Sigmoid colon (tissue), 7 donors: ENCODE measurements at regions of chr3 and their contacts with region 1.

Region 1: DNA sequence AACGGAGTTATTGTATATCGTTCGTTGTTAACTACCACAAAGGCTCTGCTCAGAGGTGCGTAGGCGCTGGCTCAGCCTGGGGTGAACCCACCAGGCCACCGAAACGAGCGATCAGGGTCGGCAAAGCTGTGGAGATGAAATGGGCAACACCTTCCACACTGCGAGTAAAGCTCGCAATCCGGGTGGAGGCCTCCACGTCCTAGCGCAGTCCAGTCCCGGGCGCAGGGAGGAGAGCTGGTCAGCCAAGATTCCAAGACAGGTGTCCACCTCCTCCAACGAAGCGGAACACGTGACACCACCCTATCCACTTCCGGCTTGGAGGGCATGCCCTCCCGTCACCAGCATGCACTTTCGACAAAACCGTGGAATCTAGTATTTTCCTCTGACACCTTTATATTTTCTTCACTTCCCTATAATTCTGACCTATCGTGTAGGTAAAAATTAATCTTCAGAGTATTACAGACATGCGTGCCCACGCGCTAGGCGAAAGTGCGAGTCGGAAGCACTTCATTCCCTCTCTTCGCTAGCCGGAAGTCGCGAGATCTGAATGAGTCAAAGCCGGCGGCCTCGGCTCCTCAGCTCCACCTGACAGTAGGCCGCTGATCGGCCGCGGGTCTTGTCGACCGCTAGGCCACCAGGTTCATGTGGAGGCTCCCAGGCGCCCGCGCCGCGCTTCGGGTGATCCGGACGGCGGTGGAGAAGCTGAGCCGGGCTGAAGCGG is at the start of gene PDE12:
- DNase-seq: peak; percentile 92
- H3K4me3 ChIP-seq: peak within 1 kb of the TSS; percentile 80 to 93 (median 90)
- H3K27ac ChIP-seq: peak within 1 kb of the TSS; percentile 91 to 98 (median 94)
- H3K4me1 ChIP-seq: peaks cover 0 to 39% (median 30%) of the 10 kb centered on the region in 4 donors
- H3K27me3 ChIP-seq: no peaks in the 10 kb centered on the region
- CTCF ChIP-seq: no peak
- EP300 ChIP-seq: no peak
- POLR2A ChIP-seq: peak; percentile 62 to 83
- total RNA-seq, gene PDE12: 11.4 to 17.9 (median 12.4) TPM

Region 2: DNA sequence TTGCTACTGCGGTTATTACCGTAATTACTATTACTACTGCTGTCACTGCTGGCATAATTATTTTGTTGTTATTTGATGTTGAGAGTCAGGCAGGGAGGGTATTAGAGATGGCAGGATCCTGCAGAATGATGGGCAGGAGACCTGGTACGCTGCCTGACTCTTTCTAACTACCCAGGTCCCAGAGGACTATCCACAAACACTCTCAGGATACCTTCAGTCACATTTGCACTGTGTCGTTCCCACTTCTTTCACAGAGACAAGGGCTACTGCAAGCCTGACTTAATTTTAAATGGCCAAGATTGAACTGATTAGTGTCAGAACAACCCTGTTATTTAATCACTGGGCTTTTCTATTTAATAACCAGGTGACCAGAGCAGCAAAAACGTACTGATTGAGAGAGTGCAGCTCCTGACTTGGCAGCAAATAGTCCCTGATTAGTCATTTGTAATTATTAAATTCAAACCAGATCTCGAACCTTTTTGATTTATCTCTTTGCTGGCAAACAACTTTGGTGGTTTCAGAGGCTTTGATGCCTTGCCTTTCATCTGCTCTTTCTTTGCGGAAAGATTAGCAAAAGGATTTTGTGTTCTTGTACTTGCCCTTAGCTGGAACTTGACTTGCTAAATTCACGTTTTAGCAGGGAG is 665.3 kb before region 1 on chr3:
- intact Hi-C with region 1: no loop called
- DNase-seq: no peak
- H3K4me3 ChIP-seq: no peak overlapping the region
- H3K27ac ChIP-seq: no peak overlapping the region
- H3K4me1 ChIP-seq: peaks cover 0 to 20% (median 9%) of the 10 kb centered on the region in 4 donors
- H3K27me3 ChIP-seq: no peaks in the 10 kb centered on the region
- CTCF ChIP-seq: no peak
- EP300 ChIP-seq: no peak
- POLR2A ChIP-seq: no peak

Region 3: DNA sequence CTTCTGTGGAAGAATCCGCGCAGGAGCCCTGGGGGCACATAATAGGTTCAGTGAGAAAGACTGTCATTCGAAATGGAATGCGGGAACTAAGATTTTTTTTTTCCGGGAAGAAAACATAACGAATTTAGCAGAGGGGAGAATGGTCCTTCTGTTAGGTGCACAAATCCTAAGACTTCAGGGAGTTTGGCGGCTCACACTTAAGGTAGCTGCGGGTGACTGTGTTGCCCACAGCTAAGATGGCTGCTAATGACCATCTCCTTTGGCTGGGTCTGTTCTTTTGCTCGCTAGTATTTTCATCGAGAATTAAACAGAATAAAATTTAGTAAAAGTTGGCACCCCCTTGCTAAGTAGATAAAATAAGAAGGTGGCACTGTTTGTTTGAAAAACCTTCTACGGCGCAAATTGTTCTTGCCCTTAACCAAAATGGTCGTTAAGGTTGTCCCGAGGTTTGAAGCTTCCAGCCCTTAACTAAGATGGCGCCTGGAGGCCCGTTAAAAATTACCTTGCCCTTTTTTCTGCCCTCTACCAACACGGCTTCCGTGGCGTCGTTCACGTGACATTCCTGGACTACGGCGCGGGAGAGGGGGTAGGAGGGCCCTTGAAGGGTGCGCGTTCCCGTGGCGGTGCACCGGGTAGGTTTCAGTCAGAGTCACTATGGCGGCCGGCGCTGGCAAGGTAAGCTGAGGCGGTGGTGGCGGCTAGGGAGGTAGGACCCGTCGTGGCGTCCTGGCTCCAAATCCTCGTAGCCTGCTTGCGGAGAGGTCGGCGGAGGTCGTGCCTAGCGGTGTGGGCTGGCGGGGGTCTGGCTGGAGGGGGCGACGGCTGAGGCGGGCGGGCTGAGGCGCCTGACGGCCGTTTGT is 200.0 kb after region 1 on chr3 and contains the start of gene SLMAP:
- intact Hi-C with region 1: loop called (anchors 5 kb)
- DNase-seq: peak; percentile 99
- H3K4me3 ChIP-seq: peak within 1 kb of the TSS; percentile 80 to 96 (median 88)
- H3K27ac ChIP-seq: peak within 1 kb of the TSS; percentile 87 to 93 (median 90)
- H3K4me1 ChIP-seq: peaks cover 0 to 43% (median 36%) of the 10 kb centered on the region in 4 donors
- H3K27me3 ChIP-seq: no peaks in the 10 kb centered on the region
- CTCF ChIP-seq: no peak
- EP300 ChIP-seq: peak in 1 of 4 donors; percentile 26
- POLR2A ChIP-seq: peak in 1 of 2 donors; percentile 47
- total RNA-seq, gene SLMAP: 300 to 745 (median 456) TPM